ENCODE measurements at regions of chr15 and their contacts with region 1.

Region 1: GRCh38 chr15:52078876-52079700 is 33.5 kb downstream of the BCL2L10 start:
- DNase-seq: peak; percentile 63
- H3K4me3 ChIP-seq: no peak overlapping the region
- H3K27ac ChIP-seq: no peak overlapping the region
- H3K4me1 ChIP-seq: peaks cover 3% of the 10 kb centered on the region
- H3K27me3 ChIP-seq: no peaks in the 10 kb centered on the region
- CTCF ChIP-seq: peak; percentile 86 to 92
- POLR2A ChIP-seq: no peak

Region 2: DNA sequence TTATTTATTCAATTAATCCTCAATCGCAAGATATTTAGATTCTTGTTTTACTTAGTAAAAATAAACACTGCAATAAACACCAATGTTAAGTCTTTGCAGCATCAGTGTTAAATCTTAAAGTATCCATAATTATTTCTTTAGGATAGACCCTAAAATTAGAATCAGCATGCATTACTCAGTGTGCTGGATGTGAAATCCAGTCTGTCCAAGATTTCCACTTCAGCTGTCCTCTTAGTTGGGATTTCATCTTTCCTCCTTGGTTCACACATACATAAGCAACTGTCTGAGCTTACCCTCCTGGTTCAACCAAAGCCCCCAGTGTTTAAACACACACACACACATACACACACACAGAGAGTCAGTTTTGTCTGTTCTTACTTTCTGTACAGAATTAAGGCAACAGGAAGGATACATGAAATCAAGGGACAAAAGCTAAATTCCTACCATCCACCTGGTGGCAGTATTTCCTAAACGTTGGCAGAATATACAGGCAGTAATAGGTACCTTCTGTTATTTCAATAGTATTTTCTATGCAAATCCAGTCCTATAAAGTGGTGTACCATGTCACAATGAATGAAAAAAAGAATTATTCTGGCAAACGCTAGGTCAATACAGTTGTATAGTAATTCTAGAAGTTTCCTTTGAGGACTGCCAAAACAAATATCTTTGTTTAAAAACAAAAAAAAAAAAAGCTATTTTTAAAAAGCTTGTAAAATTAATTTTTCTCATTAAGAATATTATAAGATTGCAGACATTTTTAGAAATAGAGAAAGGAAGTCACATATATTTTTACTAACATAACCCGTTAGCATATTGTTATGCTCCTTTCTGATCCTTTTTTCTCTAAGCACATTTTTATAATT is 429.2 kb before region 1 on chr15:
- CTCF ChIA-PET with region 1: no interaction called
- POLR2A ChIA-PET with region 1: no interaction called
- dilution Hi-C with region 1: no loop called
- intact Hi-C with region 1: loop called (anchors 10 kb)
- DNase-seq: peak; percentile 81
- H3K4me3 ChIP-seq: no peak overlapping the region
- H3K27ac ChIP-seq: no peak overlapping the region
- H3K4me1 ChIP-seq: peaks cover 2% of the 10 kb centered on the region
- H3K27me3 ChIP-seq: peaks cover 2 to 7% of the 10 kb centered on the region in 2 experiments
- CTCF ChIP-seq: peak; percentile 47 to 62
- POLR2A ChIP-seq: no peak

Region 3: DNA sequence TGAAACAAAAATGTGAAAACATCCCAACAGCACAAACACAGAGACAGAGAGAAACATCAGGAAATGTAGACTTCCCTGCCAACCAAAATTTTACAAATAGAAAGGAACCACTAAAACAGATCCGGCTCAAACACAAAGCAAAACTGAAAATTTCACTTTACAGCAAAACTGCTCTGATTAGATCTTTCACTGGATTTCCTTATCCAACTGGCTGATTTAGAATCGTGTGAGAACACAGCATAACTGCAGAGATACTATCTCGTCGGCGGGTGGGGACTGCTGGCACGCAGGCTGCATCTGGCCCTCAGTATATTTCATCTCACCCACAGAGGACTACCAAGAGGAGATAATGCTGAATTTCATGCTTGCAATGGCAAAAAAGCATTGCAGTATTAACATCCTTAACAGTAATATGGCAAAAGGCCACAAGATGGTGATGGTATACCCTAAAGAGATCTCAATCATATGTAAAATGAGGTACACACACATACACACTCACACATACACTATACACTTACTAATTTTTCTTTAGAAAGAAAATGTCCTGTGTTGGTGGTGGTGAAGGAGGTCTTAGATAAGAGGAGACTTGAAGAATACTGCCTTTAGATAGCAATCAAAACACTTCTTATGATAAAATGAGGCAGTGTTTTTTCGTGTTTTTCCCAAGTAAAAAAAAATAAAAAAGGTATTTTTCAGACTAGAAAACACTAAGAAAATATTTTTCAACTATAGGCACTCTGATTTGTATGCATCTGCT is 96.9 kb before region 1 on chr15:
- CTCF ChIA-PET with region 1: interaction called, 52 read pairs
- POLR2A ChIA-PET with region 1: no interaction called
- dilution Hi-C with region 1: no loop called
- intact Hi-C with region 1: loop called (anchors 1 kb)
- DNase-seq: peak; percentile 94
- H3K4me3 ChIP-seq: peak overlapping the region; percentile 5 to 77 (median 10)
- H3K27ac ChIP-seq: peak overlapping the region; percentile 96
- H3K4me1 ChIP-seq: peaks cover 20% of the 10 kb centered on the region
- H3K27me3 ChIP-seq: no peaks in the 10 kb centered on the region
- CTCF ChIP-seq: peak in 1 of 2 donors; percentile 56
- POLR2A ChIP-seq: peak; percentile 38

Region 4: DNA sequence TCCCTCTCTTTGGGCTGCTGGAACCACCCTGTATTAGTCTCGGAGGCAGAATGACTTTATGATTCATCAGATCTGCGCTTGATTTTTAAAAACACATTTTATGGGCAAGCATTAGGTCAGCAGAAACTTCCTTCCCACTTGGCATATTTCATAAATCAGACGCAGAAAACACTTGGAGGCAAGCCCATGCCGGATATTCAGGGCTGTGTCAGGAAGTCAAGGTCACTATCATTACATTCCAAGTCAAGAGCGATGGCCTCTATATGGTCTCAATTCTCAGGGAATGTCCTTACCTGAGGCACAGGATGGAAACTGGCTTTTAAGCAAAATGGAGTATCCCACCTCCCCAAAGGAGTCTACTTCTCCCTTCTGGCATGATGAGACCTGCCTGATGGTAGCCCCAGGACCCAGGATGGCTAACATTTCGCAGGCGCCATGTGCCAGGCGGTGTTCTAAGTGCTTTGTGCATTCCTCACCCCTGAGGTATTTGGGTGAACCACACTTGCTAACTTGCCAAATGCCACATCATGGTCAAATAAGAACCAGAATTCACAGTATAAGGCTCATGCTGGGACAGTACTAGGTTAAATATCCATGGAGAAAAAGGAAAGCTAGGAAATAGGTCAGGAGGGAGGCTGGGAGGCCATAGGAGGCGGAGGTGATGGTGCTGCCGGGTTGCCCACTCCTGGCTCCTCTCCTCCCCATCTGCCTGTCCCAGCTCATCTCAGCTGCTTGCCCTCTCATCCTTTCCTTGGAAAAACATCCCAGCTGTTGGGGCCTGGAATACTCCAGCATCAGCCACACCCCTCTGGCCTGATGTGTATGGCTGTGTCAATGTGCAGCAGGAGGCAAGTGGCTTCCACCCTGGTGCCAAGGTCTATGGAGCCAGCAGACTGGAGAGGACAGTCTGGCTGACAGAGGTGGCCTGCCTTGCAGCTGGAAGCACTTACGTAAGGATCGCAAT is 14.7 kb after region 1 on chr15:
- CTCF ChIA-PET with region 1: interaction called, 16 read pairs
- POLR2A ChIA-PET with region 1: no interaction called
- dilution Hi-C with region 1: no loop called
- intact Hi-C with region 1: no loop called
- DNase-seq: peak; percentile 99
- H3K4me3 ChIP-seq: peak overlapping the region in 1 of 3 experiments; percentile 14
- H3K27ac ChIP-seq: peak overlapping the region; percentile 99
- H3K4me1 ChIP-seq: peaks cover 34% of the 10 kb centered on the region
- H3K27me3 ChIP-seq: no peaks in the 10 kb centered on the region
- CTCF ChIP-seq: no peak
- POLR2A ChIP-seq: peak; percentile 69

Region 5: GRCh38 chr15:52139599-52140491 is 60.8 kb after region 1 on chr15:
- CTCF ChIA-PET with region 1: interaction called, 102 read pairs
- POLR2A ChIA-PET with region 1: no interaction called
- dilution Hi-C with region 1: no loop called
- intact Hi-C with region 1: loop called (anchors 2 kb)
- DNase-seq: peak; percentile 81
- H3K4me3 ChIP-seq: no peak overlapping the region
- H3K27ac ChIP-seq: no peak overlapping the region
- H3K4me1 ChIP-seq: peaks cover 6% of the 10 kb centered on the region
- H3K27me3 ChIP-seq: no peaks in the 10 kb centered on the region
- CTCF ChIP-seq: peak; percentile 80 to 85
- POLR2A ChIP-seq: no peak

Region 6: GRCh38 chr15:52227456-52227855 is 148.4 kb after region 1 on chr15:
- CTCF ChIA-PET with region 1: interaction called, 10 read pairs
- POLR2A ChIA-PET with region 1: no interaction called
- dilution Hi-C with region 1: no loop called
- intact Hi-C with region 1: no loop called
- DNase-seq: peak; percentile 82
- H3K4me3 ChIP-seq: no peak overlapping the region
- H3K27ac ChIP-seq: no peak overlapping the region
- H3K4me1 ChIP-seq: no peaks in the 10 kb centered on the region
- H3K27me3 ChIP-seq: no peaks in the 10 kb centered on the region
- CTCF ChIP-seq: peak; percentile 72 to 76
- POLR2A ChIP-seq: no peak

Region 7: GRCh38 chr15:52238149-52238548 is 159.1 kb after region 1 on chr15:
- CTCF ChIA-PET with region 1: no interaction called
- POLR2A ChIA-PET with region 1: no interaction called
- dilution Hi-C with region 1: no loop called
- intact Hi-C with region 1: no loop called
- DNase-seq: no peak
- H3K4me3 ChIP-seq: no peak overlapping the region
- H3K27ac ChIP-seq: no peak overlapping the region
- H3K4me1 ChIP-seq: no peaks in the 10 kb centered on the region
- H3K27me3 ChIP-seq: no peaks in the 10 kb centered on the region
- CTCF ChIP-seq: no peak
- POLR2A ChIP-seq: no peak

Measured in endothelial cell of umbilical vein (primary cell).